Naive thymus-derived CD4-positive, alpha-beta T cell (primary cell): ENCODE measurements at regions of chr1 and their contacts with region 1.

Region 1: DNA sequence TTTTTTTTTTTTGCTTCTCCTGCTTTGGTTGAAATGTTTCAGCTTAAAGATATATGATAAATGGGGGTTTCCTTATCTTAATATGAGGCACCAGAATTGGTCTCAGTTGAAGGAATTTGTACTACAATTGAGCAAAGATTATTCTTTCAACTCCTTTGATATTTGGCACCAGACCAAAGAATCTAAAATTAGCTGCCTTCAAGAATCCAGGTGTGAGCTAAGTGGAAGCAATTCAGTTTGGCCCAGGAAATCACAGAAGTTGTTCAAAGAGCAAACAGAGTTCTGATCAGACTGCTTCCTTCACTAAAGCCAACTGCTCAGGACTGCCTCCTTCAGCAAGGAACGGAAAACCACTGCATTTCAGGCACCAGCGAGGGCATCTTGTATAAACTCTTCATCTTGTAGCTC is 68.3 kb upstream of the BCAR3 start:
- DNase-seq: no peak
- ATAC-seq: no peak
- H3K4me3 ChIP-seq: no peak overlapping the region
- H3K4me3 Mint-ChIP-seq: no peak overlapping the region
- H3K27ac ChIP-seq: no peak overlapping the region
- H3K27ac Mint-ChIP-seq: peak overlapping the region in 1 of 9 donors; percentile 14
- H3K4me1 ChIP-seq: peaks cover 0 to 4% of the 10 kb centered on the region in 2 donors
- H3K4me1 Mint-ChIP-seq: peaks cover 2 to 35% (median 8%) of the 10 kb centered on the region in 7 donors
- H3K27me3 ChIP-seq: no peaks in the 10 kb centered on the region
- H3K27me3 Mint-ChIP-seq: peaks cover 7 to 18% (median 12%) of the 10 kb centered on the region in 5 donors

Region 2: GRCh38 chr1:93692983-93693591 is 56.8 kb before region 1 on chr1:
- CTCF ChIA-PET with region 1: no interaction called
- POLR2A ChIA-PET with region 1: no interaction called
- intact Hi-C with region 1: loop called in 1 of 2 experiments (anchors 10 kb)
- DNase-seq: peak in 1 of 9 donors; percentile 37
- ATAC-seq: peak; percentile 64
- H3K4me3 ChIP-seq: no peak overlapping the region
- H3K4me3 Mint-ChIP-seq: peak overlapping the region in 1 of 10 donors; percentile 40
- H3K27ac ChIP-seq: no peak overlapping the region
- H3K27ac Mint-ChIP-seq: peak overlapping the region in 1 of 9 donors; percentile 60
- H3K4me1 ChIP-seq: no peaks in the 10 kb centered on the region
- H3K4me1 Mint-ChIP-seq: peaks cover 0 to 20% (median 0%) of the 10 kb centered on the region in 7 donors
- H3K27me3 ChIP-seq: no peaks in the 10 kb centered on the region
- H3K27me3 Mint-ChIP-seq: peaks cover 0 to 7% (median under 1%) of the 10 kb centered on the region in 5 donors

Region 3: GRCh38 chr1:93779540-93780192 is 29.8 kb after region 1 on chr1:
- CTCF ChIA-PET with region 1: no interaction called
- POLR2A ChIA-PET with region 1: no interaction called
- intact Hi-C with region 1: no loop called
- DNase-seq: no peak
- ATAC-seq: no peak
- H3K4me3 ChIP-seq: no peak overlapping the region
- H3K4me3 Mint-ChIP-seq: no peak overlapping the region
- H3K27ac ChIP-seq: no peak overlapping the region
- H3K27ac Mint-ChIP-seq: no peak overlapping the region
- H3K4me1 ChIP-seq: no peaks in the 10 kb centered on the region
- H3K4me1 Mint-ChIP-seq: no peaks in the 10 kb centered on the region
- H3K27me3 ChIP-seq: no peaks in the 10 kb centered on the region
- H3K27me3 Mint-ChIP-seq: peaks cover 0 to 15% (median 0%) of the 10 kb centered on the region in 5 donors